Activated T-helper 1 cell treated with anti-CD3 and anti-CD28 coated beads, Interleukin-12 subunit alpha, Interleukin-12 subunit beta, Interleukin-2, Interleukin-4 antibody, amounts not matched to agents 30 ng/mL and 10 ng/mL and 1 ng/mL, durations not matched to agents 14 hours and 24 hours and 36 hours (primary cell): ENCODE measurements at regions of chr7 and their contacts with region 1.

Region 1: DNA sequence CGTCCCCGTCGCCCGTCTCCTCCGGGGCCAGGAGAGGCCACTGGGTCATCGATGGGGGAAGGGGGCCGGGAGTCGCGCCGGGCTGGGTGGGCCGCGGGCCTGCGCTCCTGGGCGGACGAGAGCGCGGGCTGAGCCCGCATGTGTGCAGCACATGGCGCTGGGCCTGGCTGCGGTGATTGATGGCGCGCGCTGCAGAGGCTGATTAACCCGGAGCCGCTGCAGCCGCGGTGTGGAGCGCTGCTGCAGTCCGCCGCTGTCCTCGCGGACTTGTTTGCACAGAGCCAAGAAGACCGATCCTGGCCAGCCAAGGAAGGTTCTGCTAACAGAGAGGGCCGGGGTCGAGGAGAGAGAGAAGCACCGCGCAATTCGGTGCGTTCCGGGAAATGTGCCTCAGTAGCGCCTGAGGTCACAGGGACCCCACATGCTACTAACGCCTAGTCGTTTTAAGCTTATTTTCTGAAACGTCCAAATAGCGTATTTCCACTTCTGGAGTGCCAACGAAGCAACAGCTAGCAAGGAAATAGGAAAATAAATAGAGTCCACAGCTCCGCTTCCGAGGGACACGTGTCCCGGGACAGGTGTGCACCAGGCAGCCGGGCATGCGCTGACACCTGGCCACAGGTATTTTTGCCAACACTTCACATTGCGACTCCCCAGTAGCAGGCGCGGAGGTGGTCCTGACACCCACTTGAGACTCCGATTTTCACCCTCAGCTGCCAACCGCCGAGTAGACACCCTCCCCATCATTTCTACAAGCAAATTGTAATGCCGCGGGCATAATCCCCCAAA is 6.2 kb downstream of the MNX1 start:
- DNase-seq: no peak
- H3K4me3 Mint-ChIP-seq: no peak overlapping the region
- H3K27ac Mint-ChIP-seq: peak overlapping the region; percentile 40
- H3K4me1 Mint-ChIP-seq: peaks cover 14% of the 10 kb centered on the region
- H3K27me3 Mint-ChIP-seq: peaks cover 72% of the 10 kb centered on the region

Region 2: GRCh38 chr7:155371884-155372781 is 1632.1 kb before region 1 on chr7:
- intact Hi-C with region 1: loop called (anchors 1 kb)
- DNase-seq: no peak
- H3K4me3 Mint-ChIP-seq: no peak overlapping the region
- H3K27ac Mint-ChIP-seq: peak overlapping the region; percentile 71
- H3K4me1 Mint-ChIP-seq: peaks cover 24% of the 10 kb centered on the region
- H3K27me3 Mint-ChIP-seq: peaks cover 66% of the 10 kb centered on the region

Region 3: DNA sequence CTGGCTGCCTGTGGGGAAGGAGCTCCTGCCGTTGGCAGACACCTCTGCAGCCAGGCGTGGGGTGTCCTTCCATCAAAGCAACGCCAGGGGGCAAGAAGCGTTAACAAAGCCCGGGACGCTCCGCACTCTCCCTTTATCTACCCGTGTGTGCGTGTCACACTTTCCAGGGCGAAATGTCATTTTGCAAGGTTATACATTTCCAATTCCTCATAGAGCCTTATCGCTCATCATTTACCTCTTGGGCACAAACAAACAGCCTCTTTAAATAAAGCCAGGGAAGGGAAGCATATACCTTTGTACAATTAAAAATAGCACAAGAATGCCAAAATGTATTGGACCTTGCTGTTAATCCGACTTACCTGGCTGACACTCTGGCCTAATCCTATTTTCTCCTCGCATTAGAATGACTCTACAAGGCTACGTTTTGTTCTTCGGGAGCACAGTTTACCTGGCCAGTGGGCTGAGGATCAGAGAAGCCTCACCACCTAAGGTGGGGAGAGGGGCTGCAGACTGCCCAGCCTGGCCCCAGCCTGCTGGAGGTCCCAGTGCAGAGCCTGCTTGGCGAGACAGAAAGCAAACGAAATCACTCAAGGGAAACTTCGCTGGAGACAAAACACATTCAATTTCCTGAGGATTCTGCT is 1623.9 kb before region 1 on chr7:
- intact Hi-C with region 1: loop called (anchors 1 kb)
- DNase-seq: peak; percentile 47
- H3K4me3 Mint-ChIP-seq: no peak overlapping the region
- H3K27ac Mint-ChIP-seq: peak overlapping the region; percentile 2
- H3K4me1 Mint-ChIP-seq: peaks cover 27% of the 10 kb centered on the region
- H3K27me3 Mint-ChIP-seq: peaks cover 69% of the 10 kb centered on the region

Region 4: DNA sequence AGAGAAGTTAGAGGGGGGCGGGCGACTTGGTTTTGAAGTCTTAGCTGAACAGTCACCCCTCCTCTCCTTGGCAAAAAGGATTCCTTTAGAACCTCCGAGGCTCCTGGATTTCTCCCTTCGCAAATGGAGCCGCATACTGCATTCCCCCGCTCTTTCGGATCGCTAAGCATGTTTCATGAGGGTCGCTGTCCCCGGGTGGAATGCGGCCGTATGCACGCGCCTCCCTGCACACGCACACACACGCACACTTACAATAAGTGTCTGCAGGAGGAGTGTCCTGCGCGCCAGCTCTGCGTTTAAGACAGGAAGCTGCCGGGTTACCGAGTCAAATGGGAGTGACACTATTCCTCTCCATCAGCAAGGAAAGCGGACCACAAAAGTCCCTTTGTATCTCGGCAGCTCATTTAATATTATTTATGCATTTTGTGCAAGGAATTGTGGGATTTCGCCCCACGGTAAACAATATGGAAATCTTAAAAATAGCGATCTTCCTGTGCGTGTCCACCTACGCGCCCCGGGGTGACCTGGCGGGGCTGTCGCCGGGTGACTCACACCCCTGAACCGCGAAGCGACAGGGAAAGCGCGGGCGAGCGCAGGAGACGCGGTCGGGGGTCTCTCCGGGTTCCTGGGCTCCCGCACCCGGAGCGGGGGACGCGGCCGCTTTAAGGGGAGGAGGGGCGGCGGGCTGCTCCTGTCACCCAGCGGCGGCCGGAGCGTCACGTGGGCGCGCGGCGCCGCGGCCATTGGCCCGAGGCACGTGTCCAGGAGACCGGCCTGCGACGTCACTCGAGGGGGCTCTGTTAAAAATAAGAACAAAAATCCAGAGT is 1547.3 kb before region 1 on chr7:
- intact Hi-C with region 1: loop called (anchors 2 kb)
- DNase-seq: no peak
- H3K4me3 Mint-ChIP-seq: peak overlapping the region; percentile 5
- H3K27ac Mint-ChIP-seq: peak overlapping the region; percentile 70
- H3K4me1 Mint-ChIP-seq: peaks cover 4% of the 10 kb centered on the region
- H3K27me3 Mint-ChIP-seq: peaks cover 68% of the 10 kb centered on the region

Region 5: GRCh38 chr7:155533827-155534690 is 1470.2 kb before region 1 on chr7:
- intact Hi-C with region 1: loop called (anchors 5 kb)
- DNase-seq: no peak
- H3K4me3 Mint-ChIP-seq: no peak overlapping the region
- H3K27ac Mint-ChIP-seq: no peak overlapping the region
- H3K4me1 Mint-ChIP-seq: peaks cover 11% of the 10 kb centered on the region
- H3K27me3 Mint-ChIP-seq: peaks cover 61% of the 10 kb centered on the region

Region 6: DNA sequence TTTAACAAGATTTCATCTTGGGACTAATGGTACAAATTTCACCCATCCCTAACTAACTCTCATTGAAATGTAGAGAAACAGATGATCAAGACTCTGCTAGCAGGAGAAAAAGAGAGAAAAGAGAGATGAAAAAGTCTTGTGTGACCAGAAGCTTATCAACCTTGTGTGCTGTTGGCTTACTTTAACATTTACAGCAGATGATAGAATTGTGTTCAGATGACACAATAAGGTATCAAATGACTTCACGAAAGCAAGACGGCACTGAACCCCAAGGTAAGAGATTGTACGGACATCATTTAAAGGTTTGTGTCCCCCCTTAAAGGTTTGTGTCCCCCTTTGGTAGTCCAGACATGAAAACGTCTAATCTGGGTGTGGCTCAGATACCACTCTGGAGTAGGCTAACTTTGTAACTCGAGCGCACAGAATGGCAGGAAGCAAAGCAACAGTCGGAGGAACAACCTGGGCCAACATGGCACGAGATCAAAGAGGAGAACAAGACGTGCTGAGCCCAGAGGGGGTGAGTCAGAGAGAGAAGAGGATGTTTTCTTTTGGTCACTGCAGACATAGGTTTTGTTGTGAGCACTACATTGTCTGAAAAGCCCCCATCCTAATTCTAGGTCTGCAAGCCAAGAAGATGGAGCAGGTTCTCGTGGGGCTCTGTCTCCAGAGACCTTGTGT is 100.9 kb before region 1 on chr7:
- intact Hi-C with region 1: loop called (anchors 10 kb)
- DNase-seq: no peak
- H3K4me3 Mint-ChIP-seq: no peak overlapping the region
- H3K27ac Mint-ChIP-seq: no peak overlapping the region
- H3K4me1 Mint-ChIP-seq: peaks cover 7% of the 10 kb centered on the region
- H3K27me3 Mint-ChIP-seq: peaks cover 5% of the 10 kb centered on the region

Region 7: DNA sequence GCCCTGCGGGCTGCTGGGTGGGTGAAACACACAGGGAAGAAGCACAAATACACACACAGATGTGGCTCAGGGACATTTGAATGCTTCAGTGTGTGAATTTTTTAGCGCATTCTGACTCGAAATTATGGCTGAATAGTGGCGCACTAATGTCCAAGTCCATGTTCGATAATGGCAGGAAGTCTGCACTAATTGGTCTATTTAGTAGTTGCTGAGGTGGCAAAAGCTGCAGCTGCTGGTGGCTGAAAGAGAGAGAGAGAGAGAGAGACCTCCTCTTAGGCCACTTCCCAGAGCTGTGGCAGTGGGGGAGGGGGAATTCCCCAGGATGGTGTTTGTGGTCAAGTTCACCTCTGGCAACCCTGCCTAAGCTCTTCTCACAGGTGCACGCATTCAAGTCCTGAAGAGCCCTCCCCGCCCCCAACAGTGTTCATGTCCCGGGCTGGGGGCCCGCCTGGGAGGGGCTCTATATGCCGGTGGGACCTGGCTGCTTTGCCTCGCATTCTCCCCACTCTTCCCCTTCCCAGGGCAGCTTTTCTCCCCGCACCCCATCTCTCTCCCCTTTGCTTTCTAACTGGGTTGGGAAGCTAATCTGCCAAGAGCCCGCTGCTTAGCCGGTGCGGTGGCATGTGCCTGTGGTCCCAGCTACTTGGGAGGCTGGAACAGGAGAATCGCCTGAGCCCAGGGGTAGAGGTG is 12.3 kb after region 1 on chr7:
- intact Hi-C with region 1: loop called (anchors 1 kb)
- DNase-seq: peak; percentile 20
- H3K4me3 Mint-ChIP-seq: no peak overlapping the region
- H3K27ac Mint-ChIP-seq: peak overlapping the region; percentile 44
- H3K4me1 Mint-ChIP-seq: peaks cover 14% of the 10 kb centered on the region
- H3K27me3 Mint-ChIP-seq: peaks cover 80% of the 10 kb centered on the region